Dorsolateral prefrontal cortex (tissue), 120 donors: ENCODE measurements at regions of chr15 and their contacts with region 1.

Region 1: GRCh38 chr15:57640935-57641682 is 49.4 kb downstream of the MYZAP start:
- DNase-seq: peak in 3 of 10 donors; percentile 24 to 54 (median 50)
- H3K4me3 ChIP-seq: no peak overlapping the region
- H3K27ac ChIP-seq: no peak overlapping the region
- H3K27me3 ChIP-seq: no peaks in the 10 kb centered on the region
- CTCF ChIP-seq: peak in 55 of 56 donors; percentile 20 to 76 (median 55)

Region 2: GRCh38 chr15:57527382-57528091 is 113.6 kb before region 1 on chr15:
- intact Hi-C with region 1: no loop called
- DNase-seq: peak in 1 of 10 donors; percentile 36
- H3K4me3 ChIP-seq: no peak overlapping the region
- H3K27ac ChIP-seq: peak overlapping the region in 16 of 59 donors; percentile 4 to 68 (median 40)
- H3K27me3 ChIP-seq: peaks cover 0 to 2% (median 0%) of the 10 kb centered on the region in 45 donors
- CTCF ChIP-seq: peak; percentile 58 to 97 (median 79)

Region 3: DNA sequence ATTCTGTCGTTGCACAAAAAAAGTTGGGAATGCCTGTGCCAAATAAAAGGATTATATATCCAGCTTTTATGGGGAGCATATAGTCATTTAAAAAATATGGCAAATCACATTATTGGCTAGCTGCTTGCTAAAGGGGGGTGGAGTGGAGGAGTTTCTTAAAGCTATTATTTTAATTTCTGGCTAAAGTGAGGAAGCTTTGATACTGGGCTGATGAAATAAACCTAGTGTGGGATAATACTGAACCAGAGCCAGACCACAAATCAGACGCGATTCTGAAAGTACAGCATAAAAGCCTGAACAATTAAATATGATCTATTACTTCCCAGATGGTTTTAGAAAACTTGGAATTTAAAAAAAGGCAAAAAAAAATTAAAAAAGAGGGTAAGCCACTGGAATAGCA is 79.8 kb after region 1 on chr15:
- intact Hi-C with region 1: no loop called
- DNase-seq: no peak
- H3K4me3 ChIP-seq: no peak overlapping the region
- H3K27ac ChIP-seq: no peak overlapping the region
- H3K27me3 ChIP-seq: no peaks in the 10 kb centered on the region
- CTCF ChIP-seq: no peak

Region 4: GRCh38 chr15:57861036-57861638 is 220.0 kb after region 1 on chr15:
- intact Hi-C with region 1: loop called in 1 of 2 experiments (anchors 5 kb)
- DNase-seq: peak in 1 of 10 donors; percentile 18
- H3K4me3 ChIP-seq: no peak overlapping the region
- H3K27ac ChIP-seq: no peak overlapping the region
- H3K27me3 ChIP-seq: peaks cover 0 to 3% (median 0%) of the 10 kb centered on the region in 45 donors
- CTCF ChIP-seq: peak; percentile 82 to 98 (median 92)